ENCODE measurements at regions of chr1 and their contacts with region 1.

Region 1: DNA sequence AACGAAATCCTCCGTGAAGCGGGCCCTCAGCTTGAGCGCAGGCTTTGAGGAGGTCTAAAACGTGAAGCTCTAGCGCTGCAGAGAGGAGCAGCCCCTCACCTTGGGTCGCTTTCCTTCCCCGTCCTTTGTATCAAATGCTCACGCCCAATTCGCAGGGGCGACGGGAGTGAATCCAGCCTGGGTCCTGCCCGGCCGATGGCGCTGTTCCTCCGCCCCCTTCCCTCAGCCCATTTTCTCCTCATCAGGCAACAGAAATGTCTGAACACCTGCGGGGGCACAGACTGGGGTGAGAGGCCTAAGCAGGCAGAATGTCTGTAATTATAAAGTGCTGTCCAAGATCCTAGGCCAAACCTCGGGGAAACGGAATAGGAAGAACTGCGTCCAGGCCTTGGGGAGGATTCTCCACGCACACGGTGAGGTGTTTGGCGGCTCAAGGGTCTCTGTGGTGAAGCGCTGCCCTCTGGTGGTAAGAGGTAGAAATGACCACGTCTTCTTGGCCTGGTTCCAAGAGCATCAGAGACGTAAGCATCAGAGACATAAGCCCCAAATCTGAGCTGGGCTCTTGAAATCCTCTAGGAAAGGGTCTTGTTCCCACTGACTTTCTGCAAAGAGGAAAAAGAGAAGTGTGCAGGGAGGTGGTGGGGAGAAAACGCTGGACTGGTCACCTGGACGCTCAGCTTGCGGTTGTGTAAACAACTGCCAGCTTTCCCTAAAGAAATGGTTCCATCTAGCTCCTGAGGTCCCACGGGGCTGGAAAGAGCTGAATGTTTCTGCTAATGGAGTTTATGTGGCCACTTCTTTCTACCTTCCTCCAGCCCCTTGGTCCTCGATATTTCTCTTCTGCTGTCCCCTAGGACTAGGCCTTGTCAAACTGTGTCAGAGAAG is 92.1 kb upstream of the CD53 start:
- DNase-seq: peak; percentile 43 to 90 (median 65)
- H3K4me3 ChIP-seq: no peak overlapping the region
- H3K27ac ChIP-seq: no peak overlapping the region
- H3K4me1 ChIP-seq: no peaks in the 10 kb centered on the region
- H3K27me3 ChIP-seq: peaks cover 11% of the 10 kb centered on the region
- CTCF ChIP-seq: peak; percentile 63 to 78 (median 68)
- POLR2A ChIP-seq: no peak

Region 2: DNA sequence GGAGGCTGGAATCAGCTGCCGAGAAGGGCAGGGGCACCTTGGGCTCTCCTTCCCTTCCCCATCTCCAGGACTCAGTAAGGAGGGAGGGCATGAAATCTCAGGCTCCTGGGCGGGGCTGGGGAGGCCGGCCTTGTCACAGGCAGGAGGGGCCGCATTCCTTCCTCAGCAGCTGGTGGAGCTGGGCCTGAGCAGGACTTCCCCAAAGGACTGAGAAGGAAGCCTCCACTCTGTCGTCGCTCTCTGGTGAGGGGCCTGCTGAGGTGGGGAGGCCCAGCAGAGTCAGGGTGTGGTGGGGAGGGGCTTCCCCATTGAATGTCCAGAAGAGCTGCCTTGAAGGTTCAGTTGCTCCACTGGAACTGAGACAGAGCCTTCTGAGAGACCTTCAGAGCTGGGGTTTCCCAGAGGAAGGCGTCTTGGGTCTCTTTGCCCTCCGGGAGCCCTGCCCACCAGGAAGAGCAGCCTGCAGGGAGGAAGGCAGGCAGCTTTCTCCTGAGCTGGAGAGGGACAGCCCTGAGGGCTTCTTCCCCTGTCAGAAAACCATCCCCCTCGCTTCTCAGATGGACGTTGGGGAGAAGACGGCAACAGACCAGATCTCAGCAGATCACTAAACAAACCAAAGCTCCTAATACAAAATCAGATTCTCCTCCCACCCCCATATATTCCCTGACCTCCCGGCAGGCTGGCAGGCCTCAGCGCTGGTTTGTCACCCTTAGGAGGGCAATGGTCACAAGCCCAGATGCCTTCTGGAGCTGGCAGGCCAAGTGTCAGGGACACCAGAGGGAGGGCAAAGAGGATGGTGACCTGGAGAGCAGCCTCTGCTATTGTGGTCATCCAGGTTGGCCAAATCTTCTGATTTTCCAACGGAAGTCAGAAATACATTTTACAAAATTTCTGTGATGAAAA is 272.6 kb before region 1 on chr1:
- intact Hi-C with region 1: no loop called
- DNase-seq: peak in 5 of 7 donors; percentile 26 to 60 (median 37)
- H3K4me3 ChIP-seq: no peak overlapping the region
- H3K27ac ChIP-seq: no peak overlapping the region
- H3K4me1 ChIP-seq: no peaks in the 10 kb centered on the region
- H3K27me3 ChIP-seq: no peaks in the 10 kb centered on the region
- CTCF ChIP-seq: no peak
- POLR2A ChIP-seq: no peak

Region 3: GRCh38 chr1:110542725-110543124 is 238.1 kb before region 1 on chr1:
- intact Hi-C with region 1: no loop called
- DNase-seq: peak in 1 of 7 donors; percentile 15
- H3K4me3 ChIP-seq: no peak overlapping the region
- H3K27ac ChIP-seq: no peak overlapping the region
- H3K4me1 ChIP-seq: no peaks in the 10 kb centered on the region
- H3K27me3 ChIP-seq: peaks cover 6% of the 10 kb centered on the region
- CTCF ChIP-seq: no peak
- POLR2A ChIP-seq: no peak

Region 4: DNA sequence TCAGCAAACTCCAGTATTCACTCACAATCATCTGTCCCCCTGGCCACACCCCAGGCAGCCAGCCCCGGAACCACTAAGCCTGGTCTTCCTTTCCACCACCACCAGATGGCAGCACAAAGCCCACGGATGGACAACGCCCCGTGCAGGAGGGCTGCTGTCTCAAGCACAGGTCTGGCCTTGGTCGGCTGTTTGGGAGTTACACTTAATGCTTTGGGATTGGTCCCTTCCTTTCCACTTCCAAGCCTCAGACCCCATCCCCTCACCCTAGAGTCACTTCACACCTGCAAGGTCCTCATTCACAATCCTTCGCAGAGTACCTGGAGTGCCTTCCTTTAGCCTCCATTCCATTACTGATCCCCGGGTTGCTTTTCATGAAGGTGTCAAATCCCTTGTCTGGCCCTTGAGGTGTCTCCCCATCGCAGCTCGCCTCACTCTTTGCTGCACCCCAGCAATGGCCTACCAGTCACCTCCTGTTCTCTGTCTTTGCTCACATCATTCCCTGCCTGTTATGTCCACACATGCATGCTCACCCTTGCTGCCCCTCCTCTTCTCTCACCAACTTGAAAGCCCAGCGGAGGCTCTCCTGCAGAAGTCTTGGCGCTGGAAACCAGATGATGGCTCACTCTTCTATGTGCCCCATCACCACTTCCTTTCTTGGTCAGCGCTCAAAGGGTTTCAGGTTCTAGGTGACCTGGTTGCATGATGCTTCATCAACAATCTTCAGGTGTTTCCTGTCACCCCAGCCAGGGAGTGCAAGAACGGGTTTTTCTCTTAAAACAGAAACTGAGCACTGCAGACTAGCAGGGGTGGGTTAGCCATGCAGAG is 149.8 kb before region 1 on chr1:
- intact Hi-C with region 1: loop called (anchors 5 kb)
- DNase-seq: peak; percentile 72 to 86 (median 77)
- H3K4me3 ChIP-seq: no peak overlapping the region
- H3K27ac ChIP-seq: no peak overlapping the region
- H3K4me1 ChIP-seq: no peaks in the 10 kb centered on the region
- H3K27me3 ChIP-seq: peaks cover 7% of the 10 kb centered on the region
- CTCF ChIP-seq: peak; percentile 65 to 86 (median 80)
- POLR2A ChIP-seq: no peak